GM18951 (cell line): ENCODE measurements at regions of chr1 and their contacts with region 1.

Region 1: DNA sequence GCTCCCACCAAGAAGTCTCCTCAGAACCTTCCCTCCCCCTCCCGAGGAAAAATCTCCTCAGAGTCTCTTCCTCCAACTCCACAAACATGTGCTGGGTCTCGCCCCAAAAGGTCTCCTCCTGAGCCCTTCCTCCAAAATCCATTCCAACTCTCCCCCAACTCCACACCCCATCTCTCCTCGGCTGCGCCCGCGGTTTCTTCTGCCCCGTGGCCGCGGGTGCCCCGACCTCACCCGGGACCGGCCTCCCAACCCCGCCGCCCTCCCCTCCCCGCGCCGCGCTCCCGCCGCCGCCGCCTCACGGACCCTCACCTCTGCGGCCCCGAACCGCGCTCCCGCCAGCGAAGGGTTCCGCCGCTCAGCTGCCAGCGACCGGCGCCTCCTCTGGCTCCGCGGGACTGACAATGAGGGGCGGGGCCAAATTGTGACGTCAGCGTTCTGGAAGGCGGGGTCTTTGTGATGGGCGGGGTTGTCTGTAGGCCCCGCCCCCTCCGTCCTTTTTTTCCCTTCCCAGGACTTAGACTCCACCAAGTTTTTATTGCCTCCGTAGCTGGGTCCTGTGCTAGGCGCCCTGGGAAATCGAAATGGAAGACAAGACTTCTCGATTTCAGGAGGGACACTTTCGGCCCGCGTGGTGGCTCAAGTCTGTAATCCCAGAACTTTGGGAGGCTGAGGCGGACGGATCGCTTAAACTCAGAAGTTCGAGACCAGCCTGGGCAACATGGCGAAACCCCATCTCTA is at the start of gene LUZP1:
- POLR2A ChIP-seq: peak; percentile 93

Region 2: GRCh38 chr1:23098463-23099170 is 70.0 kb before region 1 on chr1:
- in situ Hi-C with region 1: loop called (anchors 5 kb)
- POLR2A ChIP-seq: no peak